ENCODE measurements at regions of chr15 and their contacts with region 1.

Region 1: GRCh38 chr15:22811640-22812039 is 25.2 kb downstream of the NIPA1 start:
- DNase-seq: peak; percentile 65
- H3K4me3 ChIP-seq: no peak overlapping the region
- H3K27ac ChIP-seq: no peak overlapping the region
- H3K4me1 ChIP-seq: peaks cover 0 to 8% (median 1%) of the 10 kb centered on the region in 4 donors
- H3K27me3 ChIP-seq: no peaks in the 10 kb centered on the region
- CTCF ChIP-seq: peak in 4 of 5 experiments; percentile 33 to 46 (median 38)
- EP300 ChIP-seq: no peak
- POLR2A ChIP-seq: no peak

Region 2: DNA sequence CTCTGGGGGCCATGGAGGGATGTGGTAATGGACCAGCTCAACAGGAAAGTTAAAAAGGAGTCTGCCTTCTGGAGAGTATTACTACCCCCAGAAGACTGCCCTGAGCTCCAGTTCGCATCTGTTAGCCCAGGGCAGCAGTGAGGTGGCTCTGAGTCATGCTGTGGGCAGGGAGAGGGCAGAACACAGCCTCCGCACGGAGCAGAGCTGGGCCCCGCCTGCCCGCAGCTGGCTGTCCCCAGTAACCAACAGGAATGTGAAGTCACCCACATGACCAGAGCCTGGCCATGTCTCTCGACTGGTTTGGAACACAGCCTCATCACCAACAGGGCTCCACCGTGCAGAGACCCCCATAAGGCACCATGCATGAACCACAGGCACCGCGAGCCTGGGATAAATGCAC is 106.4 kb after region 1 on chr15:
- in situ Hi-C with region 1: loop called in 1 of 4 experiments (anchors 25 kb)
- intact Hi-C with region 1: no loop called
- DNase-seq: no peak
- H3K4me3 ChIP-seq: no peak overlapping the region
- H3K27ac ChIP-seq: no peak overlapping the region
- H3K4me1 ChIP-seq: no peaks in the 10 kb centered on the region
- H3K27me3 ChIP-seq: no peaks in the 10 kb centered on the region
- CTCF ChIP-seq: no peak
- EP300 ChIP-seq: no peak
- POLR2A ChIP-seq: no peak